SK-N-SH (cell line): ENCODE measurements at regions of chr16 and their contacts with region 1.

Region 1: DNA sequence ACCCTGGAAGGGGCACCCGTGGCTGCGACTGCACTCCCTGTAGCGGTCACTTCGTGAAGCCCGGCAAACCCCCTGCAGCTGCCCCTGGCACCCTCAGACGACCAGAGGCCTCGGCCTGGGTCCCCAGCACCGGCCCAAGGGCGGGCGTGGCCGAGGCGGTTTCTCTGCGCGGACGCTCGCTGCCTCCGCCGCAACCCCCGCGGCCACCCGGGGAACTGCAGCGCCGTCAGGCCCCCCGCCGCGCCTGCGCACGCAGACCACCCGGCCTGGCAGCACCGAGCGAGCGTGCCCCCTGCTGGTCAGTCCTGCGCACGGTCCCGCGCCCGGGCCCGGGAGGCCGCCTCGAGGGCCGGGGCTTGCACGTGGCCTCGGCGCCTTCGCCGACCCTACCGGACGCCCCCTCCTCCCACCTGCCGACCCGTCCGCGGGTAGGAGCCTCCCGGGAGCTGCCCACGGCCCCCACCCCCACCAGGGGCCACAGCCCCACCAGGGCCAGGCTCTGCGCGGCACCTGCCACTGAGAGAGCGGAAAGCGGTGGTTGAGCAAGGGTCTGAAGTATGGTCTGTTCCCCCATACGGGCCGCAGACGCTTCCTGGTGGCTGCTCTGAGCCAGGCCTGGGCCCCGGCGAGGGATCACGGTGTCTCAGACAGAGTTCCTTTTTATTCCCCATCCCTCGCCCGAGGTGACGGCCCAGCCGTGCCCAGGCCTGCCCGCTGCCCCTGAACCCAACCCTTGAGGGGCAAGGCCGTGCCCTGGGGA is 11.5 kb upstream of the HS3ST6 start:
- DNase-seq: peak; percentile 99
- H3K4me3 ChIP-seq: peak overlapping the region; percentile 56 to 64
- H3K27ac ChIP-seq: peak overlapping the region in 1 of 2 experiments; percentile 77; a peak in 3 of 4 replicates
- H3K4me1 ChIP-seq: peaks cover 0 to 17% of the 10 kb centered on the region in 2 experiments; a peak in 1 of 4 replicates
- H3K27me3 ChIP-seq: no peaks in the 10 kb centered on the region
- CTCF ChIP-seq: peak; percentile 73
- EP300 ChIP-seq: no peak
- RAD21 ChIP-seq: peak; percentile 91

Region 2: GRCh38 chr16:1863681-1864460 is 65.9 kb before region 1 on chr16:
- CTCF ChIA-PET with region 1: interaction called, 137 read pairs
- POLR2A ChIA-PET with region 1: interaction called, 3 read pairs
- DNase-seq: peak; percentile 44
- H3K4me3 ChIP-seq: no peak overlapping the region
- H3K27ac ChIP-seq: no peak overlapping the region
- H3K4me1 ChIP-seq: no peaks in the 10 kb centered on the region; a peak in 1 of 4 replicates
- H3K27me3 ChIP-seq: no peaks in the 10 kb centered on the region; the same call in 1 of the 2 replicates
- CTCF ChIP-seq: peak; percentile 60
- EP300 ChIP-seq: no peak
- RAD21 ChIP-seq: peak; percentile 70

Region 3: GRCh38 chr16:1884155-1884760 is 45.5 kb before region 1 on chr16:
- CTCF ChIA-PET with region 1: interaction called, 42 read pairs
- POLR2A ChIA-PET with region 1: interaction called, 4 read pairs
- DNase-seq: peak; percentile 57
- H3K4me3 ChIP-seq: no peak overlapping the region
- H3K27ac ChIP-seq: no peak overlapping the region
- H3K4me1 ChIP-seq: no peaks in the 10 kb centered on the region
- H3K27me3 ChIP-seq: no peaks in the 10 kb centered on the region; the same call in 1 of the 2 replicates
- CTCF ChIP-seq: peak; percentile 37; the same call in 1 of the 2 replicates
- EP300 ChIP-seq: no peak
- RAD21 ChIP-seq: peak; percentile 29

Region 4: DNA sequence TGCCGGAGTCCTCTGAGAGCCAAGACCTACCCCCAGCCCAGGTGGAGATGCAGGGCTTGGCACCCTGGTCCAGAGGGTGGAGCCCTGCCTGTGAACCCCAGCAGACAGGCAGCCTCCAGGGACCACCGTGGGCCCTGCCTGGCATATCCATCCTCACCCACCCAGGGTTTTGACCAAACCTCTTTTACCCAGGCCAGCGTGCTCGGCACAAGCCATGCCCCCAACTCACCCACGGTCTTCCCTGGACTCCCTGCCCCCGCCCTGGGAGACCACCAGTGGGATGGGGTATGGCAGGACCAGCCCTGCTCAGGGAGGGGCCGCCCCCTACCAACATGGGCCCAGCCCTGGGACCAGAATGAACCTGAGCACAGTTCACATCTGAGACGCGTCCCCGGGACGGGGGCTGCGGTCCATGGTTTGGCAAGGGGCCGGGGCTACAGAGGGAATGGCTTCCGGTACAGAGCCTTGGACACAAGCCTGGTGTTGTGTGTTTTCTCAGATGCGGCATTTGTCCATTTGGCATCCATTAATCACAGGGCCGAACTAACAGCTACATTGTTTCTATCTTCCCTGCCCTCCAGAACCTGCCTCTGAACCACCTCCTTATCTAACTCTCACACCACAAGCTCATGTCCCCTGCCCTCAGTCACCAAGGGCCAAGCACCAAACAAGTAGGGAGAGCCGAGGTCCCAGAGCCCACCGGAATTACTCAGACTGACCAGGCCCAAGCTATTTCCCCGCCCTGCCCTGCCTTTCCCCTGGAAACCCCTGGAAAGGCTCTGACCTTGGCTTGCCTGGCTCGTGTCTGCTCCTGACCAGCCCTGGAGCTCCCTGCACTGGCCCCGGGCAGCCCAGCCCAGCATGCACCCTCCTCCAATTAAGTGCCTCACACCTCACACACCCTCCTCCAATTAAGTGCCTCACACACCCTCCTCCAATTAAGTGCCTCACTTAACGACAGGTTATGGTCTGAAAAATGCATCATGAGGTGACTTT is 25.6 kb before region 1 on chr16:
- CTCF ChIA-PET with region 1: interaction called, 13 read pairs
- POLR2A ChIA-PET with region 1: no interaction called
- DNase-seq: peak; percentile 37
- H3K4me3 ChIP-seq: no peak overlapping the region
- H3K27ac ChIP-seq: no peak overlapping the region
- H3K4me1 ChIP-seq: peaks cover 0 to 12% of the 10 kb centered on the region in 2 experiments; a peak in 1 of 4 replicates
- H3K27me3 ChIP-seq: peaks cover 5% of the 10 kb centered on the region; the same call in 1 of the 2 replicates
- CTCF ChIP-seq: no peak
- EP300 ChIP-seq: no peak
- RAD21 ChIP-seq: no peak

Region 5: DNA sequence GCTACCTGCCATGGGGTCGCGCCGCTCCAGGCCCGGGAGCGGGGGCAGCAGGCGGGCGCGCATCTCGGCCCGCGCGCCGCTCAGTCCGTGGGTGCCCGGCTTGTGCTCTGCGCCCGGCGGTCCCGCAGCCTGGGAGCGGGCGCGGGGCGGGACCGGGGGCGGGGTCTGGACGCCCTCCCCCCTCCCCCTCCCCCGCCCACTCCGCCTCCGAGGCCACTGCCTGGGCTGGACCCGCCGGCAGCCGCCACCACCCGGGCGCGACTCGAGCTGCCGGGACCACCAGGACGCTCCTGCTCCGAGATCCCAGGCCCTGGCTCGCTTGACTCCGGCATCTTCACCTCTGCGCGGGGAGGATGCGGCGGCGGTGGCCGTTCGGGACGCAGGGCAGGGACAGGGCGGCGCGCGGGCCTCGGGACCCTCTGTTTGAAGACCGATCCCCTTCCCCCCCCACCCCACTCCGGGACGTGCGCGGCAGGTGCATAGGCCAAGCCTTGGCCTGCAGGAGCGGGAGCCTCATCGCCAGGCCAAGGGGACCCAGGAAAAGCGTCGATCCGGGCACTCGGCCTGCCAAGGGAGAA is 11.4 kb before region 1 on chr16 and contains the start of gene HS3ST6:
- CTCF ChIA-PET with region 1: interaction called, 38 read pairs
- POLR2A ChIA-PET with region 1: no interaction called
- DNase-seq: peak; percentile 88
- H3K4me3 ChIP-seq: peak within 1 kb of the TSS in 1 of 2 experiments; percentile 29; a peak in 1 of 4 replicates
- H3K27ac ChIP-seq: no peak within 1 kb of the TSS
- H3K4me1 ChIP-seq: peaks cover 0 to 13% of the 10 kb centered on the region in 2 experiments; a peak in 1 of 4 replicates
- H3K27me3 ChIP-seq: peaks cover 45% of the 10 kb centered on the region
- CTCF ChIP-seq: no peak
- EP300 ChIP-seq: no peak
- RAD21 ChIP-seq: no peak
- polyA plus RNA-seq, gene HS3ST6: 0.03 TPM in 1 of 2 replicates, not detected in the other

Region 6: DNA sequence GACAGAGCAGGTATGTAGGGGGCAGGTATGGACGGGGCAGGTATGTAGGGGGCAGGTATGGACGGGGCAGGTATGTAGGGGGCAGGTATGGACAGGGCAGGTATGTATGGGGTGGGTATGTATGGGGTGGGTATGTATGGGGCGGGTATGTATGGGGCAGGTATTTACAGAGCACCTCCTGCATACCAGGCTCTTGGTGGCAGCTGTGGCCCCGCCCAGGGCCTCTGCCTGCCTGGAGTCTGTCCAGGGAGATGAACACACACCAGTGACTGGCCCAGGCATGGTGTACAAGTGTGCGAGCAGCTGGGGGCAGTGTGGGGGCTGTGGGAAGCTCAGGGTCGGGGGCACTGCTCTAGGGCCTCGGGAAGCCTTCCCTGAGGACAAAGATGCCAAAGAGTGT is 20.3 kb after region 1 on chr16:
- CTCF ChIA-PET with region 1: interaction called, 16 read pairs
- POLR2A ChIA-PET with region 1: no interaction called
- DNase-seq: no peak
- H3K4me3 ChIP-seq: no peak overlapping the region
- H3K27ac ChIP-seq: no peak overlapping the region
- H3K4me1 ChIP-seq: peaks cover 0 to 9% of the 10 kb centered on the region in 2 experiments; a peak in 1 of 4 replicates
- H3K27me3 ChIP-seq: no peaks in the 10 kb centered on the region
- CTCF ChIP-seq: no peak
- EP300 ChIP-seq: no peak
- RAD21 ChIP-seq: no peak

Region 7: GRCh38 chr16:2095315-2095853 is 165.6 kb after region 1 on chr16:
- CTCF ChIA-PET with region 1: no interaction called
- POLR2A ChIA-PET with region 1: no interaction called
- DNase-seq: no peak
- H3K4me3 ChIP-seq: no peak overlapping the region
- H3K27ac ChIP-seq: no peak overlapping the region
- H3K4me1 ChIP-seq: no peaks in the 10 kb centered on the region
- H3K27me3 ChIP-seq: no peaks in the 10 kb centered on the region
- CTCF ChIP-seq: no peak
- EP300 ChIP-seq: no peak
- RAD21 ChIP-seq: no peak